IMR-90 (cell line): ENCODE measurements at regions of chr3 and their contacts with region 1.

Region 1: GRCh38 chr3:14921078-14921616 is 26.2 kb upstream of the NR2C2 start:
- DNase-seq: peak; percentile 82
- ATAC-seq: peak; percentile 94
- H3K4me3 ChIP-seq: no peak overlapping the region
- H3K27ac ChIP-seq: no peak overlapping the region
- H3K4me1 ChIP-seq: peaks cover 2% of the 10 kb centered on the region; the same call in 1 of the 2 replicates
- H3K27me3 ChIP-seq: peaks cover 13% of the 10 kb centered on the region
- CTCF ChIP-seq: peak; percentile 95
- POLR2A ChIP-seq: no peak
- RAD21 ChIP-seq: peak; percentile 96

Region 2: DNA sequence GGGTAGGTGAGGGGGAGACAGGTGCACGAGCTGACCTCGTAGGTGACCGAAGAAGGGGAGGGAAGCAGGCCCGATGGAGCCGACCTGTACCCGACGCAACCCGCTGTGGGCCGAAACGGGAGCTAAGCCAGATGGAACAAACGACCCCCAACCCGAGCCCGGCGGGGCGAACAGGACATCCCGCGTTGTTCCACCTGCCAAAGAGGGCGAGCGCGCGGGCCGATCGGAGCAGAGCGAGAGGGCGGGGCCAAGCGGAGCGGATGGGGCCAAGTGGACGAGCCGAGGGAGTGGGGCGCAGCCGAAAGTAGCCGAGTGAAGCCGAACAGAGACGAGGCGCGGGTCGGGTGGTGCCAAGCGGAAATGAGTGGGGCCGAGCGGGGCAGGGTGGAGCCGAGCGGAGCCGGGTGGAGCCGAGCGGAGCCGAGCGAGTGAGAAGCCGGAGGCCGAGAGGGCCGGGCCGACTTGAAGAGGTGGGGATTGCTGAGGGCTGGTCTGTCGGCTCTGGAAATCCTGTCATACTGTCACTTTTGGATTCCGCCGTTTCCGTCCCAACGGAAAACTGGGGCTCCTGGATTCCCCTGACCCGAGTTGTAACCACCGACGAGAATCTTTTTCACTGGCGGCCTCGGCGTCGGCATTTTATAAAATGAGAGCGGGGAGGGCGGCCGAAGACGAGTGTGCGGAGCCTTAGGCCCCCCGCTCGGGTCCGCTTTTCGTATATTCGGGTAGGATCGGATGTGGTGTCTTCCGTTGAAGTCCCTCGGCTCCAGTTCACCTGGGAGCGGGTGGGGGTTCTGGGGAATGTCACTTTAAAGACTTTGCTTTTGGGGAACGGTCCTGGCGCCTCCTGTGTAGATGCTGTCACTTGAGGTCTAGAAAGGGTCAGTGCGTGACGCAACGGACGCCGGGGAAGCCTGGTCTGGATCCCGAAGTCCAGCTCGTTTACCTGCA is 1025.7 kb before region 1 on chr3:
- CTCF ChIA-PET with region 1: interaction called, 3 read pairs
- POLR2A ChIA-PET with region 1: no interaction called
- dilution Hi-C with region 1: no loop called
- in situ Hi-C with region 1: no loop called
- intact Hi-C with region 1: loop called (anchors 5 kb)
- DNase-seq: peak; percentile 71
- ATAC-seq: peak; percentile 100
- H3K4me3 ChIP-seq: peak overlapping the region; percentile 78
- H3K27ac ChIP-seq: peak overlapping the region; percentile 60; the same call in 1 of the 2 replicates
- H3K4me1 ChIP-seq: peaks cover 7% of the 10 kb centered on the region
- H3K27me3 ChIP-seq: peaks cover 10% of the 10 kb centered on the region; the same call in 1 of the 2 replicates
- CTCF ChIP-seq: no peak
- POLR2A ChIP-seq: no peak
- RAD21 ChIP-seq: no peak

Region 3: DNA sequence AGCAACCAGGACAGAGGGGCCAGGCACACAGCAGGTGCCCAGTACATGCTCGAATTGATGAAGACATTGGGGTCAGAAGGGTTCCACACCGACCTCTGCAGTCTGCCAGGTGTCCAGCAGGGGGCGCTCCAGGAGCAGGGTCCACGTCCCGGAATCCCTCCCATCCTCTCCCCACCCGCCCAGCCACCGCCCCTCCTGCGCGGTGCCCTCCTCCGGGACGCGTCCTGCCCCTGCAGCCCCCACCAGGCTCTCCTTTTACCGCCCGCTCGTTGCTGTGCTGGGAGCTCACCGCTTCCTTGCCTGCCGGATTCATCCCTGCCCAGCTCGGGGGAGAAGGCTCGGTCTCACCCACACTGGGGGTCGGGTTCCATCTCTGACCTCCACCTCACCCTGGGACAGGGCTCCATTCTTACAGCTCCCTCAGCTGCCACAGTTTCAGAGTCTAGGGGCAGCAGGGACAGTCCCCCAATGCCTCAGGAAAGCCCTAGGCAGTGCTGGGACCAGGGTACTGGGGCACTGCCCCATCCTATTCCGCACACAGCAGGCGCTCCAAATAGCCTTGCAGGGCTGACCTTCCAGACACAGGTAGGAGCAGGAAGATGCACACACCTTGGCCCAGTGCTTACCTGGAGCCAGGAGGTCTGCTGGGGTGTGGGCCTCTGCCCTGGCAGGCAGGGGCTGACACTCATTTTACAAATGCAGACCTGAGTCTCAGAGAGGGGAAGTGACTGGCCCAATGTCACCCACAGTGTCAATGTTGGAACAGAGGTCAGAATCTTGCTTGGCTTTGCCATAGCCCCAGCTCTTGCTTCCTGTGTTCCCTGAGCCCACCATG is 412.0 kb before region 1 on chr3:
- CTCF ChIA-PET with region 1: no interaction called
- POLR2A ChIA-PET with region 1: no interaction called
- dilution Hi-C with region 1: no loop called
- in situ Hi-C with region 1: loop called (anchors 10 kb)
- intact Hi-C with region 1: loop called (anchors 1 kb)
- DNase-seq: peak; percentile 18
- ATAC-seq: peak; percentile 93
- H3K4me3 ChIP-seq: no peak overlapping the region
- H3K27ac ChIP-seq: no peak overlapping the region
- H3K4me1 ChIP-seq: no peaks in the 10 kb centered on the region
- H3K27me3 ChIP-seq: peaks cover 17% of the 10 kb centered on the region
- CTCF ChIP-seq: peak; percentile 71
- POLR2A ChIP-seq: no peak
- RAD21 ChIP-seq: peak; percentile 68

Region 4: DNA sequence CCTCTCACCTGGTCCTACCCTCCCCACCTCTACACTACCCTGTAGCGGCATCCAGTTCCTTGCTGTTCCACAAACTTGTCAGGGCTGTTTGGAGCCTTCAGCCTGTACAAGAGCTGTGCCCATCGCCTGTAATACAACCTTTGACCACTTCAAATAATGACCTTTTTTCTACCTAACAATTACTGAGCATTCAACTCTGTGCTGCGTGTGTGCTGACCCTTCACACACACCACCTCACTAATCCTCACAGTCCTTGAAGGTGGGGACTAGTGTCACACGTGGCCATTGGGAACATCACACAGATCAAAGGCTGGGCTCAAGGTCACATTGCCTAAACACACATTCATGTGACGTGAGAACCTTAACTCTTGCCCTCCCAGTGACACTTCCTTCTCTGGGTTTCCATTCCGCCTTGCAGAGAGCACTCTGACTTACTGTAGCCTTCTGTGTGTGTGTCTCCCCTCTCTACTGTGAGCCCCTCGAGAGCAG is 243.1 kb before region 1 on chr3:
- CTCF ChIA-PET with region 1: interaction called, 30 read pairs
- POLR2A ChIA-PET with region 1: no interaction called
- dilution Hi-C with region 1: no loop called
- in situ Hi-C with region 1: loop called (anchors 5 kb)
- intact Hi-C with region 1: loop called (anchors 1 kb)
- DNase-seq: no peak
- ATAC-seq: no peak
- H3K4me3 ChIP-seq: no peak overlapping the region
- H3K27ac ChIP-seq: no peak overlapping the region
- H3K4me1 ChIP-seq: no peaks in the 10 kb centered on the region
- H3K27me3 ChIP-seq: no peaks in the 10 kb centered on the region
- CTCF ChIP-seq: no peak
- POLR2A ChIP-seq: no peak
- RAD21 ChIP-seq: no peak

Region 5: GRCh38 chr3:15051531-15051930 is 130.4 kb after region 1 on chr3:
- CTCF ChIA-PET with region 1: no interaction called
- POLR2A ChIA-PET with region 1: no interaction called
- dilution Hi-C with region 1: no loop called
- in situ Hi-C with region 1: no loop called
- intact Hi-C with region 1: loop called (anchors 5 kb)
- DNase-seq: peak; percentile 20
- ATAC-seq: peak; percentile 77
- H3K4me3 ChIP-seq: no peak overlapping the region
- H3K27ac ChIP-seq: no peak overlapping the region
- H3K4me1 ChIP-seq: peaks cover 3% of the 10 kb centered on the region; the same call in 1 of the 2 replicates
- H3K27me3 ChIP-seq: no peaks in the 10 kb centered on the region
- CTCF ChIP-seq: peak; percentile 47
- POLR2A ChIP-seq: no peak
- RAD21 ChIP-seq: peak; percentile 19

Region 6: GRCh38 chr3:15205934-15206661 is 285.0 kb after region 1 on chr3 and contains the start of gene CAPN7:
- CTCF ChIA-PET with region 1: no interaction called
- POLR2A ChIA-PET with region 1: no interaction called
- dilution Hi-C with region 1: no loop called
- in situ Hi-C with region 1: loop called (anchors 25 kb)
- intact Hi-C with region 1: loop called (anchors 2 kb)
- DNase-seq: peak; percentile 91
- ATAC-seq: peak; percentile 97
- H3K4me3 ChIP-seq: peak within 1 kb of the TSS; percentile 92
- H3K27ac ChIP-seq: peak within 1 kb of the TSS; percentile 84
- H3K4me1 ChIP-seq: no peaks in the 10 kb centered on the region
- H3K27me3 ChIP-seq: no peaks in the 10 kb centered on the region; the same call in 1 of the 2 replicates
- CTCF ChIP-seq: peak; percentile 55
- POLR2A ChIP-seq: peak; percentile 91
- RAD21 ChIP-seq: 0 out of 2 replicates have a peak, but pooled peaks have one; percentile 15
- total RNA-seq, gene CAPN7: 21.3 and 28.1 TPM in 2 replicates